Left cardiac atrium (tissue), 4 donors: ENCODE measurements at regions of chr5 and their contacts with region 1.

Region 1: GRCh38 chr5:41869739-41870626 is at the start of gene OXCT1:
- DNase-seq: peak; percentile 87
- ATAC-seq: peak; percentile 83 to 91
- total RNA-seq, gene OXCT1: 80.2 to 116 TPM

Region 2: DNA sequence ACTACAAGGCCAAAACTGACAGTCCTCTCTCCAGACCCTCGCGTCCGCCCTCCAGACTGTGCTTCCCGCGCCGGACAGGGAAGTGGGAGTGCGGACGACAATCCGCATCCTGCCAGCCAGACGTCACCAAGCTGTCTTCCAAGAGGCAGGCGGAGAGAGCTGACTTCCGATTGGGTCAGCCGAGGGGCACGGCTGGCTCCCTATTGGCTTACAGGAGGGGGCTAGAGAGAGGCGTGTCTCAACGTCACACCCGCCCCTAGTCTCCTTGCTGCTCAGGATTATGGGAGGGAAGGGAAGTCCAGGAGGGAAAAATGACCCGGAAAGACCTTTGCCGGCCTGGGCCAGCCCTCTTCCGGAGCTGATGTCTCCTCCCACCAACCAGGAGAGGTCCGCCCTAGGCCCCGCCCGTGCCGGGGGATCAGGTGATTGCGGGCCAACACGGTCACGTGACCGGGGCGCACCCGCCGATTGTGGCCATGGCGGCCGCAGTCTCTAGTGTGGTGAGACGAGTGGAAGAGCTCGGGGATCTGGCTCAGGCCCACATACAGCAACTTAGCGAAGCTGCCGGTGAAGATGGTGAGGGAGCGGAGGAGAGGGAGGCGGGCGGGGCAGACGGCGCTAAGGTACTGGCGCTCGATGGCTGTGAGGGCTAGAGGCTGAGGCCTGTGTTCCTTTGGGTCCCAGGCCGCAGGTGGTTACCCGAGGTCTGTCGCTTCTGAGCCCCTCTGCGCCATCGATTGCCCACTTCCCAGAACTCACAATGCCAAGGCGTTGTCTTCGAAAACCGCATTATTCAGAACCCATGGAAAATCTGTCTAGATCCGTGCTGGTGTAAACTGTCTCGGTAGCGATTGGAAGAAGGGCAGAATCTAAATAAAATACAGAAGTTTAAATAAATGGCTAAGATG is 34.2 kb after region 1 on chr5 and contains the start of gene RIMOC1:
- intact Hi-C with region 1: loop called in 1 of 2 experiments (anchors 5 kb)
- DNase-seq: peak; percentile 98
- ATAC-seq: peak; percentile 99
- total RNA-seq, gene RIMOC1: 15.1 to 17.4 TPM

Region 3: GRCh38 chr5:41924872-41925554 is 55.0 kb after region 1 on chr5 and contains the start of gene FBXO4:
- intact Hi-C with region 1: loop called in 1 of 2 experiments (anchors 10 kb)
- DNase-seq: peak; percentile 93
- ATAC-seq: peak; percentile 99
- total RNA-seq, gene FBXO4: 6.0 to 6.6 TPM

Region 4: GRCh38 chr5:42143361-42143760 is 273.4 kb after region 1 on chr5:
- intact Hi-C with region 1: no loop called
- DNase-seq: no peak
- ATAC-seq: no peak